ENCODE measurements at regions of chr21 and their contacts with region 1.

Region 1: GRCh38 chr21:41612674-41613532 is 104.9 kb upstream of the TMPRSS2 start:
- DNase-seq: peak; percentile 79
- ATAC-seq: peak; percentile 82
- H3K4me3 Mint-ChIP-seq: peak overlapping the region; percentile 30
- H3K27ac Mint-ChIP-seq: peak overlapping the region; percentile 60
- H3K4me1 Mint-ChIP-seq: peaks cover 17% of the 10 kb centered on the region
- H3K27me3 Mint-ChIP-seq: peaks cover 6% of the 10 kb centered on the region
- CTCF ChIP-seq: peak; percentile 81

Region 2: GRCh38 chr21:41369105-41369919 is 243.6 kb before region 1 on chr21:
- CTCF ChIA-PET with region 1: interaction called, 22 read pairs
- POLR2A ChIA-PET with region 1: no interaction called
- DNase-seq: peak; percentile 64
- ATAC-seq: peak; percentile 92
- H3K4me3 Mint-ChIP-seq: peak overlapping the region; percentile 68
- H3K27ac Mint-ChIP-seq: no peak overlapping the region
- H3K4me1 Mint-ChIP-seq: peaks cover 12% of the 10 kb centered on the region
- H3K27me3 Mint-ChIP-seq: no peaks in the 10 kb centered on the region; the same call in 1 of the 2 replicates
- CTCF ChIP-seq: no peak

Region 3: DNA sequence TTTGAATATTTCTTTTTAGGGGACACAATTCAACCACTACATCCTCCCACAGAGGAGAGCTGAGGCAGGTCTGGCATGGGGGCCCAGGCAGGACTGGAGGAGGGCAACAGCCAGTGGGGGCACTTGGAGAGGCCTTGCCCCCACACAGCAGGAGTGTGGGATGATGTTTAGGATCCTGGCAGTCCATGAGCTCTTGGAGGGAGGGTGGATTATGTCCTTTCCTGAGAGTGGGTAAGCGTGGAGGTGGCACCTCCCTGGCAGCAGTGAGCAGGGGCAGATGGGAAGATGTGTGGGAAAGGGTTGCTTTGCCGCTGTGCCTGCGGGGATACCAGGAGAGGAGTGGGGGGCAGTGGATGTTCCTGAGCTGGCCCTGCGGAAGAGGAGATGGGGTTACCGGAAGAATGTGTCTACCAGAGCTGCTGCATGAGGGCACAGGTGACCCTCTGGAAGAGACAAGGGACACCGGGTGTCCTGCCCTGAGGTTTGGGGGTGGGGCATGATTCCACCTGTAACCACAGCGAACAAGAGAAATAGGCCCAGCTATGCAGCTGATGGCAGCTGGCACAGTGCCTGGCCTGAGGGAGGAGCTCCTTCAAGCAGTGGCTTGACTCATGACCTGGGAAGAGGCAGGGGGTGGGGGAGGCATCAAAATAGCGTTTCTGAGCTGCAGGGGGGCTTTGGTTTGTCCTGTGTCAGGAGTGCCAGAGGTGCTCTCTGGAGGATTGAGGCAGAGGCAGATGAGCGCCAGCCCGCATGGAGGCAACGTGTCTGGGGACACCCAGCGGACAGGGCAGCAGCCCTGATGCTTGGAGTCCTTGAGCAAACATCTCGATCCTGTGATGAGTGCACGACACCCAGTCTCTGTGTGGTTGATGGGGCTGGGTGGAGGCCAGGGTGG is 18.9 kb after region 1 on chr21:
- CTCF ChIA-PET with region 1: interaction called, 10 read pairs
- POLR2A ChIA-PET with region 1: no interaction called
- DNase-seq: no peak
- ATAC-seq: no peak
- H3K4me3 Mint-ChIP-seq: no peak overlapping the region
- H3K27ac Mint-ChIP-seq: peak overlapping the region; percentile 40; the same call in 1 of the 2 replicates
- H3K4me1 Mint-ChIP-seq: peaks cover 7% of the 10 kb centered on the region; the same call in 1 of the 2 replicates
- H3K27me3 Mint-ChIP-seq: no peaks in the 10 kb centered on the region
- CTCF ChIP-seq: no peak

Region 4: DNA sequence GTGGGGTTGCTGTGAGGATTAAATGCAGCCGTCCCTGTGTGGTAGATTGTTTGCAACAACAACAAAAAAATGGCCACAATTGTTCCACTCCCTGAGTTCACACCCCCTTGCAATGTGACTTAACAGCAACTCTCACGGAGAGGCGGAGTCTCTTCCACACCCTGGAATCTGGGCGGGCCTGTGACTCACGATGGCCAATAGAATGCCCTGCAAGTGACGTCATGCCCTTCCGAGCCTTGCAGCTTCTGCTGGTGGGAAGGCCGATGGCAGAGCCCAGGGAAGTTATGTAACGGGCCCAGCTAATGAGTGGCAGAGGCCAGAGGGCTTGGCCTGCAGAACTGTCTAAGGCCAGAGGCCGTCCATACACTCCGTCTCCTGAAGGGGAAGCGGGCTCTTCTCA is 66.0 kb after region 1 on chr21:
- CTCF ChIA-PET with region 1: interaction called, 10 read pairs
- POLR2A ChIA-PET with region 1: no interaction called
- DNase-seq: peak; percentile 85
- ATAC-seq: peak; percentile 97
- H3K4me3 Mint-ChIP-seq: no peak overlapping the region
- H3K27ac Mint-ChIP-seq: peak overlapping the region; percentile 76
- H3K4me1 Mint-ChIP-seq: peaks cover 27% of the 10 kb centered on the region
- H3K27me3 Mint-ChIP-seq: no peaks in the 10 kb centered on the region; the same call in 1 of the 2 replicates
- CTCF ChIP-seq: no peak

Region 5: DNA sequence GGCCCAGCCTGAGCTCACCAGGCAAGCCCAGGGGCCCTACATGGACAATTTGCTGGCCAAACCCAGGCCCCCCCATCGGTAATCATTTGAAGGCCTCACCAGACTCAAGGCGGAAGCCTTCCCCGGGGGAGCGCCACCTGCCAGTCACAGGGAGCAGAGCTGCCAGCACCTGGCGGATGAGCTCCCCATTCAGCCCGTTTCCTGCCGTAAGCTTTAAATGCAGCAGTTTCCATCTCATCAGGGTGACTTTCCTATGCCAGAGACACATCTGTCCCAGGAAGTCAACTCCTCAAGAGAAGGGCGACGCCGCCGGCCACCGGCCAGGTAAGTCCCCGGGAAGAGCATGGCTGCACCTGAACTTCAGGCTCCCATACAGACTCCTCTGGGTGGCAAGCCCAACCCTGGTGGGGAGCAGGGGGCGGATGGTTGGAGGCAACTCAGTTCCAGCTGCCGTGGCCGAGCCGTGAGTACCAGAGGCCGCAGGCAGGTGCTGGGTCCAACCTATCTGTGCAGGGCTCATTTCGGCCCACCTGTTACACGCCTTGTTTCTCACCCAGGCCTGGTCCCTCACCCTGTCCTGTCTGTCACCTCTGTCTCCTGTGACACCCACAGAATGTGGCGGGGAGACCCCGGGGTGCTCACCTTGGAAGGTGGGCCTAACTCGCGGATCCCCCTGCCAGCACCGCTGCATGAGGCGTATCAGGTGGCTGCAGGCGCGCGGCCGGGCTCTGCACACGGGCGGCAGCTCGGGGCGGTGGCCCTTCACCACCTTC is 133.3 kb after region 1 on chr21:
- CTCF ChIA-PET with region 1: interaction called, 84 read pairs
- POLR2A ChIA-PET with region 1: no interaction called
- DNase-seq: peak; percentile 44
- ATAC-seq: peak; percentile 69
- H3K4me3 Mint-ChIP-seq: no peak overlapping the region
- H3K27ac Mint-ChIP-seq: no peak overlapping the region
- H3K4me1 Mint-ChIP-seq: peaks cover 7% of the 10 kb centered on the region
- H3K27me3 Mint-ChIP-seq: no peaks in the 10 kb centered on the region
- CTCF ChIP-seq: no peak

Region 6: GRCh38 chr21:41796451-41797080 is 183.7 kb after region 1 on chr21:
- CTCF ChIA-PET with region 1: interaction called, 17 read pairs
- POLR2A ChIA-PET with region 1: interaction called, 3 read pairs
- DNase-seq: no peak
- ATAC-seq: no peak
- H3K4me3 Mint-ChIP-seq: no peak overlapping the region
- H3K27ac Mint-ChIP-seq: no peak overlapping the region
- H3K4me1 Mint-ChIP-seq: peaks cover 14% of the 10 kb centered on the region
- H3K27me3 Mint-ChIP-seq: peaks cover 8% of the 10 kb centered on the region; the same call in 1 of the 2 replicates
- CTCF ChIP-seq: no peak

Region 7: DNA sequence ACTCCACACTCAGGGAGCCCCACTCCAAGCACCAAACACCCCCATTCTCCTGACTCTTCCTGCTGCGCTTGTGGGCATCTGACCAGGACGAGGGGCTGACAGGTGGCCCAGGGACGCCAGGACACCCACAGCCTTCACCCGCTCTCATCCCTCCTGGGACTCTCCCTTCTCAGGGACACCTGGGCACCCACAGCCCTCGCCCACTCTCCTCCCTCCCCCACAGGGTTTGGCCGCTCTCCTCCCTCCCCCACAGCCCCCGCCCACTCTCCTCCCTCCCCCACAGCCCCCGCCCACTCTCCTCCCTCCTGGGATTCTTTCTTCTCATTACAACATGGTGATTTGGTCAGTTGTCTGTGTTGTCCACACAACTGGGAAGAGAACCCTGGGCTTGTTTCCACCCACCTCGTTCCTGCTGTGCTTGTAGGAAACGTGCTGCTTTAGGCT is 222.8 kb after region 1 on chr21:
- CTCF ChIA-PET with region 1: interaction called, 10 read pairs
- POLR2A ChIA-PET with region 1: no interaction called
- DNase-seq: no peak
- ATAC-seq: no peak; the same call in 1 of the 2 replicates
- H3K4me3 Mint-ChIP-seq: peak overlapping the region; percentile 53
- H3K27ac Mint-ChIP-seq: peak overlapping the region; percentile 93
- H3K4me1 Mint-ChIP-seq: peaks cover 25% of the 10 kb centered on the region
- H3K27me3 Mint-ChIP-seq: no peaks in the 10 kb centered on the region
- CTCF ChIP-seq: no peak

Measured in WTC11 (cell line).